ENCODE measurements at regions of chr17 and their contacts with region 1.

Region 1: DNA sequence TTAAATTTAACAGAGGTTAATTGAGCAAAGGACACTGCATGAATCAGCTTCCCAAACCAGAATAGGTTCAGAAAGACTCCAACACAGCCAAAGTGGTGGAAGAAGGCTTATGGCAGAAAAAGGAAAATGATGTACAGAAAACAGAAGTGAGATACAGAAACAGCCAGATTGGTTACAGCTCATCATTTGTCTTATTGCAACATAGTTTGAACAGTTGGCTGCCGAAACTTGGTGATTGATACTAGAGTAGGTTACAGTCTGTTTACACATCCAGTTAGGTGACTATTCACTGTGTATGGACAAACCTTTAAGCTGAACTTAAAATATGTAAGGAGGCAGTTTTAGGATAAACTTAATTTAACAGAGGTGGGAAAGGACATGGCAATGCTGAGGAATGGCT is 18.3 kb downstream of the TMEM100 start:
- DNase-seq: no peak
- ATAC-seq: no peak
- H3K4me3 Mint-ChIP-seq: no peak overlapping the region
- H3K27ac Mint-ChIP-seq: no peak overlapping the region
- H3K4me1 Mint-ChIP-seq: no peaks in the 10 kb centered on the region
- H3K27me3 Mint-ChIP-seq: peaks cover 40% of the 10 kb centered on the region

Region 2: DNA sequence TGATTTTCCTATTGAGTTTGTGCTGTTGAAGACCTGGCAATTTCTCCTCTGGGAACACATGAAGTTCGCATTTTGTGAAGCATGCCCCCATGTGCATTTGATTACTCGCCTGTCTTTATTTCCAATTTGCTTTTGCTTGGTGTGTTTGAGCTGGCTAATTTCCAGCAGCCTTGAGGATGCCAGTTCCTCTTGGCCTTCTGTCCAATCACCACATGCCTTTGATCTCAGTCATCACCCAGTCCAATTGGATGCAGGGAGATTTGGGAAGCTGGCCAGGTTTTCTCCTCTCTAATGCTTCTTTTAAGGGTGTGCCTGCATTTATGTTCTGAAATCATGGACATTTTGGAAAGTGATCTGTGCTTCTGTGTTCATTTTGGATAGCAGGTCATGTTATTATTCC is 22.0 kb after region 1 on chr17:
- CTCF ChIA-PET with region 1: interaction called, 4 read pairs
- POLR2A ChIA-PET with region 1: interaction called, 11 read pairs
- intact Hi-C with region 1: no loop called
- DNase-seq: no peak
- ATAC-seq: no peak
- H3K4me3 Mint-ChIP-seq: no peak overlapping the region
- H3K27ac Mint-ChIP-seq: no peak overlapping the region
- H3K4me1 Mint-ChIP-seq: no peaks in the 10 kb centered on the region
- H3K27me3 Mint-ChIP-seq: peaks cover 51% of the 10 kb centered on the region